Naive thymus-derived CD4-positive, alpha-beta T cell (primary cell): ENCODE measurements at regions of chr6 and their contacts with region 1.

Region 1: DNA sequence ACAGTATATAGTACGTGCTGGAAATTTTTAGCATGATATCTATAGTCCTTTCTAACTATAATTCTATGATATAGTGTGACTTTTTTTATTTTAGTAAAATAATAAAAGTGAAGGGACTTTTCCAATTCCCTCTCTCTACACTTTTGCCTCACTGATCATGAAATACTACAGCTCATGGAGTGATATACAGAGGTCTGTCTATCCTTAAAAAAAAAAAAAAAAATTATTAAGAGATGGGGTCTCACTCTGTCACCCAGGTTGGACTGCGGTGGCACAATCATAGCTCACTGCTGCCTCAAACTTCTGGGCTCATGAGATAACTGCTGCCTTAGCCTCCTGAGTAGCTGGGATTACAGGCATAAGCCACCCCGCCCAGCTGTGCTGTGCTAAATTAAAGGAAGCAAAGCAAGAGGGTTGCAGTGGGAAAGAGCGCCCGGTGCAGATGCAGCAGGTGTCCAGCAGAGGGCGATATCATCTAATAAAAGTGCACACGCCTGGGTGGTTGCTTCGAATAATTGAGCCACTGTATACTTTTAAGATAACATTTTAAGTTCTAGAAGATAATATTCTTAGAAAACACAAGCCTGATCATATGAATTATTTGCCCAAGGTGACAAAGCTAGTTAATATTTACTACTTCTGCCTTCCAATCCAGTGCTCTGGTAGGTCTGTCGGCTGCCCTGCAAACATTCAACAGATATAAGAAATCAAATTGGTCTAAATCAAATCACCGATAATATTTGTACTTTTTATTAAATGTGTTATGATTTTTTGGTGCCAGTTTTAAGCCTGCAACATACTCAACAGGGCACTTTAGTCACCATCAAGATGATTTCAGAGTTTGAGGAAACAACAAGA is 94.9 kb upstream of the NT5E start:
- DNase-seq: peak in 8 of 9 donors; percentile 10 to 63 (median 38)
- ATAC-seq: peak; percentile 70
- H3K4me3 ChIP-seq: no peak overlapping the region
- H3K4me3 Mint-ChIP-seq: no peak overlapping the region
- H3K27ac ChIP-seq: no peak overlapping the region
- H3K27ac Mint-ChIP-seq: no peak overlapping the region
- H3K4me1 ChIP-seq: no peaks in the 10 kb centered on the region
- H3K4me1 Mint-ChIP-seq: peaks cover 0 to 3% (median 0%) of the 10 kb centered on the region in 7 donors
- H3K27me3 ChIP-seq: no peaks in the 10 kb centered on the region
- H3K27me3 Mint-ChIP-seq: peaks cover 12 to 21% (median 18%) of the 10 kb centered on the region in 5 donors

Region 2: DNA sequence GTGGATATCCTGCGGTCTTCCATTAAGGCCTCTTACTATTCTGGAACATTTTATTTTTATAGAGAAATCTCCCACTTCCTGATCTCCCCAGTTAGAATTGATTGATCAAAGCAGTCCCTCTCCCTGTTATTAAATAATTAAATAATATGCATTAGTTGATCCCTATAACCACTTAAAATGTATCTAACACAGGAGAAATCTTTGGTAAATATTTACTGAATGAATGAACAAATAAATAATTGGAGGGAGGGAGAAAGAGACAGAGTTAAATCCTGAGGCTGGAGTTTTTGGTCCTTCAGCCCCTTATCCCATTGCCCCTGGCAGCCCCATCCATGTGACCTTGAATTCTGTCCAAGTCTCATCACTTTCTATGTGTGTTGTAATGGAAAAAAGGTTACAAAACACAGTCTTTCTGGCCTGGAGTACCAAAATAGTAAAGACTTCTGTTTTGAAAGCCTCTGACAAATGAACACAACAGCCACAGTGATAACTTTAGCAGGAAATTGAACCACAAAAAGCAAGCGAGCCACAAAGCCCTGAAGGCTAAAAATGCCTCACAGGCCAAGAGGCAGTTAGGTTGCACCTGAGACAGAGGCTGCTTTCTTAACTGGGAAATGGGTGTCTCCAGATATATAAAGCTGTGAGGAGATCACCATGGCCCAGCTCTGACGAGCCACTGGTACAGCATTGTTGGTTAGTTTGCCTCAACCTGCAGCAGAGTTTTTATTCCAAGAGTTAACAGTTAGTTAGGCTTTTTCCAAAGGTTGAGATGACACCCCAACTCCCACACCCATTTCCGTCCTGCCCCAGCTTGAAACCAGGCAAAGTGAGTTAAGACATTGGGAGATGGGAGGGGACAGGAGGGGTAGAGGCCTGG is 106.2 kb after region 1 on chr6:
- CTCF ChIA-PET with region 1: interaction called, 3 read pairs
- POLR2A ChIA-PET with region 1: no interaction called
- intact Hi-C with region 1: loop called in 1 of 2 experiments (anchors 5 kb)
- DNase-seq: peak in 6 of 9 donors; percentile 17 to 53 (median 46)
- ATAC-seq: peak; percentile 54
- H3K4me3 ChIP-seq: no peak overlapping the region
- H3K4me3 Mint-ChIP-seq: peak overlapping the region in 7 of 10 donors; percentile 32 to 72 (median 68)
- H3K27ac ChIP-seq: no peak overlapping the region
- H3K27ac Mint-ChIP-seq: peak overlapping the region in 8 of 9 donors; percentile 38 to 92 (median 71)
- H3K4me1 ChIP-seq: peaks cover 9 to 25% of the 10 kb centered on the region in 2 donors
- H3K4me1 Mint-ChIP-seq: peaks cover 23 to 95% (median 63%) of the 10 kb centered on the region in 7 donors
- H3K27me3 ChIP-seq: no peaks in the 10 kb centered on the region
- H3K27me3 Mint-ChIP-seq: peaks cover 0 to 30% (median 28%) of the 10 kb centered on the region in 5 donors

Region 3: GRCh38 chr6:85537055-85537494 is 182.1 kb after region 1 on chr6:
- CTCF ChIA-PET with region 1: interaction called, 5 read pairs
- POLR2A ChIA-PET with region 1: no interaction called
- intact Hi-C with region 1: loop called (anchors 1 kb)
- DNase-seq: peak in 3 of 9 donors; percentile 1 to 15 (median 4)
- ATAC-seq: no peak
- H3K4me3 ChIP-seq: no peak overlapping the region
- H3K4me3 Mint-ChIP-seq: no peak overlapping the region
- H3K27ac ChIP-seq: no peak overlapping the region
- H3K27ac Mint-ChIP-seq: peak overlapping the region in 4 of 9 donors; percentile 25 to 68 (median 54)
- H3K4me1 ChIP-seq: no peaks in the 10 kb centered on the region
- H3K4me1 Mint-ChIP-seq: peaks cover 0 to 4% (median 0%) of the 10 kb centered on the region in 7 donors
- H3K27me3 ChIP-seq: no peaks in the 10 kb centered on the region
- H3K27me3 Mint-ChIP-seq: no peaks in the 10 kb centered on the region

Region 4: DNA sequence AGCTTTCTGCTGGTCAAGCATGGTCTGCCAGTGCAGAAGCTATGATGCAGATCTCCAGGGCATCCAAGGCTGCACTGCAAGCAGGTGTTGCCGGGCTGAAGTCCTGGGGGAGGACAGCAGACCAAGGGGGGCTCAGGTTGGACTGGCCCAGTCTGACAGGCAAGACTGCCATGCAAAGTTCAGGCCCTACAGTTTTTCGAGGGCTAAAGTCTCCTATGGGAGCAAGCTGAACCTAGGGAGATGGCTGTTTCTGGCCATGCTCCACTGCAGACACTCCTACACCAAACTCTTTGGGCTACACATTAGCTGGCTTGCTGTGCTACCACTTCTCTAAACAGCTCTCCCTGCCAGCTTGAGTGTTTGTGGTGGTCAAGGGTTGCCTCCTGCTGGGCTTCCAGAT is 417.7 kb after region 1 on chr6:
- CTCF ChIA-PET with region 1: no interaction called
- POLR2A ChIA-PET with region 1: no interaction called
- intact Hi-C with region 1: loop called in 1 of 2 experiments (anchors 5 kb)
- DNase-seq: no peak
- ATAC-seq: no peak
- H3K4me3 ChIP-seq: no peak overlapping the region
- H3K4me3 Mint-ChIP-seq: no peak overlapping the region
- H3K27ac ChIP-seq: no peak overlapping the region
- H3K27ac Mint-ChIP-seq: no peak overlapping the region
- H3K4me1 ChIP-seq: no peaks in the 10 kb centered on the region
- H3K4me1 Mint-ChIP-seq: no peaks in the 10 kb centered on the region
- H3K27me3 ChIP-seq: no peaks in the 10 kb centered on the region
- H3K27me3 Mint-ChIP-seq: peaks cover 2 to 44% (median 27%) of the 10 kb centered on the region in 5 donors